Endothelial cell of umbilical vein (primary cell): ENCODE measurements at regions of chr13 and their contacts with region 1.

Region 1: GRCh38 chr13:26698392-26699196 is 62.0 kb downstream of the GPR12 start:
- DNase-seq: peak; percentile 88
- H3K4me3 ChIP-seq: no peak overlapping the region
- H3K27ac ChIP-seq: no peak overlapping the region
- H3K4me1 ChIP-seq: no peaks in the 10 kb centered on the region
- H3K27me3 ChIP-seq: peaks cover 0 to 4% of the 10 kb centered on the region in 2 experiments
- CTCF ChIP-seq: peak; percentile 89 to 92
- POLR2A ChIP-seq: no peak

Region 2: GRCh38 chr13:26186118-26186870 is 512.3 kb before region 1 on chr13:
- CTCF ChIA-PET with region 1: interaction called, 473 read pairs
- POLR2A ChIA-PET with region 1: interaction called, 5 read pairs
- dilution Hi-C with region 1: no loop called
- intact Hi-C with region 1: loop called (anchors 1 kb)
- DNase-seq: peak; percentile 92
- H3K4me3 ChIP-seq: peak overlapping the region; percentile 40 to 83 (median 71)
- H3K27ac ChIP-seq: no peak overlapping the region
- H3K4me1 ChIP-seq: peaks cover 11% of the 10 kb centered on the region
- H3K27me3 ChIP-seq: peaks cover 0 to 3% of the 10 kb centered on the region in 2 experiments
- CTCF ChIP-seq: peak; percentile 43 to 68
- POLR2A ChIP-seq: peak; percentile 51

Region 3: GRCh38 chr13:26253787-26254582 is 444.6 kb before region 1 on chr13 and contains the start of gene CDK8:
- CTCF ChIA-PET with region 1: interaction called, 13 read pairs
- POLR2A ChIA-PET with region 1: no interaction called
- dilution Hi-C with region 1: no loop called
- intact Hi-C with region 1: loop called (anchors 1 kb)
- DNase-seq: peak; percentile 89
- H3K4me3 ChIP-seq: peak within 1 kb of the TSS; percentile 65 to 95 (median 71)
- H3K27ac ChIP-seq: peak within 1 kb of the TSS; percentile 75
- H3K4me1 ChIP-seq: peaks cover 18% of the 10 kb centered on the region
- H3K27me3 ChIP-seq: peaks cover 6 to 15% of the 10 kb centered on the region in 2 experiments
- CTCF ChIP-seq: no peak
- POLR2A ChIP-seq: no peak
- total RNA-seq, gene CDK8: 11.9 and 13.3 TPM in 2 replicates

Region 4: GRCh38 chr13:26488236-26489003 is 210.2 kb before region 1 on chr13:
- CTCF ChIA-PET with region 1: interaction called, 257 read pairs
- POLR2A ChIA-PET with region 1: no interaction called
- dilution Hi-C with region 1: loop called (anchors 25 kb)
- intact Hi-C with region 1: no loop called
- DNase-seq: no peak
- H3K4me3 ChIP-seq: no peak overlapping the region
- H3K27ac ChIP-seq: no peak overlapping the region
- H3K4me1 ChIP-seq: no peaks in the 10 kb centered on the region
- H3K27me3 ChIP-seq: peaks cover 0 to 5% of the 10 kb centered on the region in 2 experiments
- CTCF ChIP-seq: no peak
- POLR2A ChIP-seq: no peak

Region 5: GRCh38 chr13:26540334-26540733 is 158.3 kb before region 1 on chr13:
- CTCF ChIA-PET with region 1: interaction called, 22 read pairs
- POLR2A ChIA-PET with region 1: no interaction called
- dilution Hi-C with region 1: no loop called
- intact Hi-C with region 1: loop called (anchors 5 kb)
- DNase-seq: no peak
- H3K4me3 ChIP-seq: no peak overlapping the region
- H3K27ac ChIP-seq: no peak overlapping the region
- H3K4me1 ChIP-seq: no peaks in the 10 kb centered on the region
- H3K27me3 ChIP-seq: peaks cover 19 to 27% of the 10 kb centered on the region in 2 experiments
- CTCF ChIP-seq: no peak
- POLR2A ChIP-seq: no peak

Region 6: DNA sequence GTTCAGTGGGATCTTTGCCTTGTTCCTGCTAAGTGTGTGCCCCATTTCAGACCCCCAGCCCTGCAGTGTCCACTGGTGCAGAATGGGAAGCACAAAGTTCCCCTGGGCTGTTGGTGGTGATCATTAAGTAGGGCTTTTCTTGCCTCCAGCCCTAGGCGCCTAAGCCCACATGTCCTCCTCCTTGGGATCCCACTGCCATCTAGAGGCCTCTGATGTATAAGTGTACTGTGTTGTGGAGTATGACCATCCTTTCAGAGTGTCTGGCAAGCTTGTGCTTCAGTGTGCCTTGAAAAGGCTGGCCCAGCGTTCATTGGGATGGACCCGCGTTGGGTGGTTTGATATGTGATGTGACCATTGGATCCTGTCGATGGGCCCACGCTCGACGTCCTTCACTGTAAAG is 69.9 kb before region 1 on chr13:
- CTCF ChIA-PET with region 1: interaction called, 27 read pairs
- POLR2A ChIA-PET with region 1: no interaction called
- dilution Hi-C with region 1: no loop called
- intact Hi-C with region 1: no loop called
- DNase-seq: peak; percentile 38
- H3K4me3 ChIP-seq: no peak overlapping the region
- H3K27ac ChIP-seq: no peak overlapping the region
- H3K4me1 ChIP-seq: no peaks in the 10 kb centered on the region
- H3K27me3 ChIP-seq: no peaks in the 10 kb centered on the region
- CTCF ChIP-seq: peak; percentile 16 to 26
- POLR2A ChIP-seq: no peak

Region 7: DNA sequence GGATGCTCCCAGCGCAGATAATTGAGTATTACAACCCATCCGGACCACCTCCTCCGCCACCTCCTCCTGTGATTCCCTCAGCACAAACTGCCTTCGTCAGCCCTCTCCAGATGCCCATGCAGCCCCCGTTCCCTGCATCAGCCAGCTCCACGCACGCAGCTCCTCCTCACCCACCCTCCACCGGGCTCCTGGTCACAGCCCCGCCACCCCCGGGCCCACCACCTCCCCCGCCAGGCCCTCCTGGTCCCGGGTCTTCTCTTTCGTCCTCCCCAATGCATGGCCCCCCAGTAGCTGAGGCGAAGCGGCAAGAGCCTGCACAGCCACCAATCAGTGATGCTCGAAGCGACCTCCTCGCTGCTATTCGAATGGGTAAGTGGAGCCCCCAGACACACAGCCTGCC is 16.0 kb before region 1 on chr13:
- CTCF ChIA-PET with region 1: interaction called, 36 read pairs
- POLR2A ChIA-PET with region 1: no interaction called
- dilution Hi-C with region 1: no loop called
- intact Hi-C with region 1: no loop called
- DNase-seq: no peak
- H3K4me3 ChIP-seq: no peak overlapping the region
- H3K27ac ChIP-seq: no peak overlapping the region
- H3K4me1 ChIP-seq: no peaks in the 10 kb centered on the region
- H3K27me3 ChIP-seq: no peaks in the 10 kb centered on the region
- CTCF ChIP-seq: no peak
- POLR2A ChIP-seq: no peak